ENCODE measurements at regions of chr1 and their contacts with region 1.

Region 1: GRCh38 chr1:24586970-24587820 is 31.3 kb downstream of the NCMAP start:
- DNase-seq: no peak
- H3K4me3 ChIP-seq: no peak overlapping the region
- H3K27ac ChIP-seq: no peak overlapping the region
- H3K4me1 ChIP-seq: no peaks in the 10 kb centered on the region
- H3K27me3 ChIP-seq: no peaks in the 10 kb centered on the region; a peak in 1 of 7 replicates
- CTCF ChIP-seq: peak; percentile 10 to 91 (median 74)
- EP300 ChIP-seq: no peak
- POLR2A ChIP-seq: no peak
- RAD21 ChIP-seq: peak; percentile 72 to 76

Region 2: DNA sequence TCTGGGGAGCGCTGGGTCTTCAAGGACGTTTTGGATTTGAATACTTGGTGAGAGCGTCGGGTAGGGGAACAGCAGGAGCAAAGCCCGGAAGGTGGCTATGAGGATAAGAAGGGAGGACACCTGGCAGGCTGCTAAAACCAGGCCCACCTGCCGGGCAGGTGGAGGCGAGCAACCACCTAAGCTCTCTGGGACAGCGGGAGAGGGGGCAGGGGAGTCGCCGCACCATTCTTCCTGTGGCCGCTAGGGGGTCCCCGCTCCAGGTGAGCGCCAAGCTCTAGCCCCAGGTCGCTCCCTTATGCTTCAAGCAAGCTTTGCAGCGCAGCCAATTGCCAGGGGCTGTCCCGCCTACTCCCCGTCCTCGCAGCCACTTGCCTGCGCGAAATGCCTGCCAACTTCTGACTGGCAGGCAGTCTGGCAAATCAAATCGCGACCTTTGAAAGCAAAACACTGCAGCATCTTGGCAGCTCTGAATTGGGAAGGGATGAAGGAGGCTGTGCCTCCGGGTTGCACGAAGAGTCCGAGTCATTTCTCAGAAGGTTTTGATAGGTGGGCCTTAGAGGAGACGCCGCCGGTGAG is 171.8 kb before region 1 on chr1 and contains the start of gene NIPAL3:
- CTCF ChIA-PET with region 1: interaction called, 14 read pairs
- POLR2A ChIA-PET with region 1: no interaction called
- DNase-seq: peak; percentile 95 to 100
- H3K4me3 ChIP-seq: peak within 1 kb of the TSS; percentile 50 to 89 (median 76)
- H3K27ac ChIP-seq: no peak within 1 kb of the TSS
- H3K4me1 ChIP-seq: peaks cover 0 to 6% (median under 1%) of the 10 kb centered on the region in 4 experiments; a peak in 3 of 7 replicates
- H3K27me3 ChIP-seq: no peaks in the 10 kb centered on the region
- CTCF ChIP-seq: peak; percentile 83 to 93 (median 85)
- EP300 ChIP-seq: no peak
- POLR2A ChIP-seq: no peak
- RAD21 ChIP-seq: peak; percentile 67 to 71
- total RNA-seq, gene NIPAL3: 11.0 and 12.6 TPM in 2 replicates

Region 3: DNA sequence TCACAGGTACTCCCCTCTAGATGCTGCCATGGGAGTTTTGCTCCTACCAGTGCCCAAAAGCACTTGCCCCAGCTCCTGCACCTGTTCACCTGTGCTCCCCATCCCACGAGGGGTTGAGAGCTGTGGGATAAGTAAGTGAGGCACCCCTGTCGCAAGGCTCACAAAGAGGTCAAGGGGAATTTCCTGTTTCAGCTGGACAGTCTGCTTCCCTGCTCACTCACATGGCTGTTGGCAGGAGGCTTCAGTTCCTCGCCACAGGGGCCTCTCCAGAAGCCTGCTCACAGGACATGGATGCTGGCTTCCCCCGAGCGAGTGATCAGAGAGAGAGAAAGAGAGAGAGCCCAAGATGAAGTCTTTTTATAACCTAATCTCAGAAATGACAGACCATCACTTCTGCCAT is 40.0 kb before region 1 on chr1:
- CTCF ChIA-PET with region 1: interaction called, 53 read pairs
- POLR2A ChIA-PET with region 1: no interaction called
- DNase-seq: no peak
- H3K4me3 ChIP-seq: no peak overlapping the region
- H3K27ac ChIP-seq: no peak overlapping the region
- H3K4me1 ChIP-seq: peaks cover 0 to 6% (median 3%) of the 10 kb centered on the region in 4 experiments; a peak in 3 of 7 replicates
- H3K27me3 ChIP-seq: no peaks in the 10 kb centered on the region
- CTCF ChIP-seq: no peak
- EP300 ChIP-seq: no peak
- POLR2A ChIP-seq: no peak
- RAD21 ChIP-seq: no peak

Region 4: GRCh38 chr1:24570354-24571126 is 16.7 kb before region 1 on chr1:
- CTCF ChIA-PET with region 1: interaction called, 50 read pairs
- POLR2A ChIA-PET with region 1: no interaction called
- DNase-seq: no peak
- H3K4me3 ChIP-seq: no peak overlapping the region
- H3K27ac ChIP-seq: no peak overlapping the region
- H3K4me1 ChIP-seq: peaks cover 2 to 11% (median 3%) of the 10 kb centered on the region in 4 experiments; a peak in 4 of 7 replicates
- H3K27me3 ChIP-seq: no peaks in the 10 kb centered on the region
- CTCF ChIP-seq: no peak
- EP300 ChIP-seq: no peak
- POLR2A ChIP-seq: no peak
- RAD21 ChIP-seq: no peak

Region 5: DNA sequence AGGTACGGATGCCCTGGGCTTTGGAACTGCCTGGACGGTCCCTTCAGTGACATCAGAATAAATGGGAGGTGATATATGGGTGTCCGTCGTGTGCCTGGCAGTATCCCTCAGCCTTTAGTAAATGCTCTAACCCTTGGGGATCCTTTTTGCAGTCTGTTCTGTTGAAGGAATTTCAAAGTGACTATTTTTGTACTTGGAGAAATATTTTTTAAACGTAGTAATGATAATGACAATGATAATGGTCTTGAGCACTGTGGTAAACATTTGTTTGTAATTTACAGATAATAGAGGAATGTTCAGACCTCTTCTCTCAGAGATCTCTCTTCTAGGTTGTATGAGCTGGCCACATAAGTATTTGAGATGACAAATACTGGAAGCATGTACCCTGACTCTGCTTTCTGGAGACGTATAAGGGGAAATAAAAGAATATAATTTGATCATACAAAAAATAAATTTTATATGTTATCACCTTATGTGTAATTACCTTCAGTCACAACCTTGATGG is 13.9 kb after region 1 on chr1:
- CTCF ChIA-PET with region 1: interaction called, 41 read pairs
- POLR2A ChIA-PET with region 1: interaction called, 3 read pairs
- DNase-seq: no peak
- H3K4me3 ChIP-seq: no peak overlapping the region
- H3K27ac ChIP-seq: no peak overlapping the region
- H3K4me1 ChIP-seq: no peaks in the 10 kb centered on the region
- H3K27me3 ChIP-seq: no peaks in the 10 kb centered on the region
- CTCF ChIP-seq: no peak
- EP300 ChIP-seq: no peak
- POLR2A ChIP-seq: no peak
- RAD21 ChIP-seq: no peak

Measured in H1 (cell line).